ENCODE measurements at regions of chr10 and their contacts with region 1.

Region 1: GRCh38 chr10:25026463-25026862 is 10.1 kb downstream of the THNSL1 start:
- DNase-seq: no peak
- H3K4me3 ChIP-seq: no peak overlapping the region
- H3K27ac ChIP-seq: no peak overlapping the region
- H3K4me1 ChIP-seq: peaks cover 0 to 7% of the 10 kb centered on the region in 2 donors
- H3K27me3 ChIP-seq: no peaks in the 10 kb centered on the region
- CTCF ChIP-seq: no peak

Region 2: DNA sequence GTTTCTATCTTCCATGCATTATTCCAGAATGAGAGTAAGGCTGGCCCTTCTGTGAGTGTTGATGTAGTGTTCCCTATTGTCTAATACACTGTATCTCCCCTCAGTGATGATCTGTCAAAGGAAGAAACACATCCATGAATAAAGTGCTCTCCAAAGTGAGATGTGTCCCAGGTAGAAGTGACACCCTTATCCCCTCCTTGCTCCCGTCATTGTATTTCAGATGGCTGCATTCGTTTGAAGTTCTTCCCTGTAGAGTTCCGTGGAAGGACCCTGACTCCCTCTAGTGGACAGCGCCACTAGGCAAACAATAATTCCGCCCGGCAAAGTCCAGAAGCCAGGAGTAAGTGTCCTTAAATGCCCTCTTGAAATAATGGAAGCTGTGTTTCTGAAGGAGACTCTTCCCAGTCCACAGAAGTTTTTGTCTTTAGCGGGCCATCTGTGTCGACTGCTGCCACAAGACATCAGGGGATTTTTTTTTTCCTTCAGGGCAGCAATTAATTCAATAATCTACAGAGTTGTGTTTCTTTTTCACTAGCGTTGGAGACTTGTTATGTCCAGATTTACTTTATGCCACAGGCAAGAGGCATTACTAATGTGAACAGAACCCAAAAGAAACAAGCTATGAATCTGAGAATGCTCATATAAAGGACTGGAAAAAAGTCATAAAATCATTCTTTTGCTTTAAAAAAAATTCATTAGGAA is 54.6 kb after region 1 on chr10:
- intact Hi-C with region 1: loop called (anchors 2 kb)
- DNase-seq: peak; percentile 36 to 91
- H3K4me3 ChIP-seq: peak overlapping the region in 1 of 2 donors; percentile 48
- H3K27ac ChIP-seq: peak overlapping the region; percentile 11 to 75
- H3K4me1 ChIP-seq: peaks cover 0 to 15% of the 10 kb centered on the region in 2 donors
- H3K27me3 ChIP-seq: no peaks in the 10 kb centered on the region
- CTCF ChIP-seq: peak; percentile 77 to 91 (median 86)